Panc1 (cell line): ENCODE measurements at regions of chrX and their contacts with region 1.

Region 1: DNA sequence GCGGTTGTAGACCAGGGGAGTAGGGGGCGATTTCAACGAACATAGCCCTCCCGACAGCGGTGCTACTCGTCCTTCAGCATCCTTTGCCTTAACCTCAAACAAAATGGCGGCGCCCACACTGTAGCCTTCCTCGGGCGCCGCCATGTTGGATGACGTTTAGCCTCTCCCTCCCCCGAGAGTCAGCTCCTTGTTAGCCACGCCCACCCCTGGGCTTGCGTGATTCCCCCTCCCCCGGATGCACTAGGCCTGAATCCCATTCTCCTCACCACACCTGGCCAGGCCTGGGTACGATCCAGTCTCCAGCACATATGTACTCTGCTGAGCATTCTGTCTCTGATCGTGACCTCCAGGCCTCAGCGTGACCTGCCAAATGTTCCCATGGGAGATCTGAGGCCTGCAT is 49.0 kb upstream of the ZNF157 start:
- DNase-seq: no peak
- ATAC-seq: no peak
- H3K4me3 ChIP-seq: no peak overlapping the region
- H3K27ac ChIP-seq: no peak overlapping the region
- H3K4me1 ChIP-seq: no peaks in the 10 kb centered on the region
- H3K27me3 ChIP-seq: no peaks in the 10 kb centered on the region
- CTCF ChIP-seq: no peak

Region 2: GRCh38 chrX:47283015-47283771 is 38.2 kb before region 1 on chrX:
- CTCF ChIA-PET with region 1: interaction called, 11 read pairs
- POLR2A ChIA-PET with region 1: no interaction called
- in situ Hi-C with region 1: no loop called
- intact Hi-C with region 1: no loop called
- DNase-seq: no peak
- ATAC-seq: no peak
- H3K4me3 ChIP-seq: no peak overlapping the region
- H3K27ac ChIP-seq: no peak overlapping the region
- H3K4me1 ChIP-seq: no peaks in the 10 kb centered on the region
- H3K27me3 ChIP-seq: no peaks in the 10 kb centered on the region
- CTCF ChIP-seq: no peak

Region 3: DNA sequence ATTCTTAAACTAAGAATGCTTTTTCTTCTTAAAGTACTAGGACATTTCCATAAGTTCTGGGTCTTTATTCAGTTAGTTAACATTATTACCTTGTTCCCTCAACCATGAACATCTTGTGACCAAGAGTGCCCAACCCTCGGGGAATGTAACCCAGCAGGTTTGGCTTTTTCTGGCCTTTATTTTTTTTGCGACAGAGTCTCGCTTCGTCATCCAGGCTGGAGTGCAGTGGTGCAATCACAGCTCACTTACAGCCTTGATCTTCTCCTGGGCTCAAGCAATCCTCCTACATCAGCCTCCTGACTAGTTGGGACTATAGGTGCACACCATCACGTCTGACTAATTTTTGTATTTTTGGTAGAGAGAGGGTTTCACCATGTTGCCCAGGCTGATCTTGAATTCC is 23.5 kb before region 1 on chrX:
- CTCF ChIA-PET with region 1: no interaction called
- POLR2A ChIA-PET with region 1: interaction called, 11 read pairs
- in situ Hi-C with region 1: no loop called
- intact Hi-C with region 1: no loop called
- DNase-seq: no peak
- ATAC-seq: no peak
- H3K4me3 ChIP-seq: no peak overlapping the region
- H3K27ac ChIP-seq: no peak overlapping the region
- H3K4me1 ChIP-seq: no peaks in the 10 kb centered on the region
- H3K27me3 ChIP-seq: no peaks in the 10 kb centered on the region
- CTCF ChIP-seq: no peak